ENCODE measurements at regions of chr4 and their contacts with region 1.

Region 1: DNA sequence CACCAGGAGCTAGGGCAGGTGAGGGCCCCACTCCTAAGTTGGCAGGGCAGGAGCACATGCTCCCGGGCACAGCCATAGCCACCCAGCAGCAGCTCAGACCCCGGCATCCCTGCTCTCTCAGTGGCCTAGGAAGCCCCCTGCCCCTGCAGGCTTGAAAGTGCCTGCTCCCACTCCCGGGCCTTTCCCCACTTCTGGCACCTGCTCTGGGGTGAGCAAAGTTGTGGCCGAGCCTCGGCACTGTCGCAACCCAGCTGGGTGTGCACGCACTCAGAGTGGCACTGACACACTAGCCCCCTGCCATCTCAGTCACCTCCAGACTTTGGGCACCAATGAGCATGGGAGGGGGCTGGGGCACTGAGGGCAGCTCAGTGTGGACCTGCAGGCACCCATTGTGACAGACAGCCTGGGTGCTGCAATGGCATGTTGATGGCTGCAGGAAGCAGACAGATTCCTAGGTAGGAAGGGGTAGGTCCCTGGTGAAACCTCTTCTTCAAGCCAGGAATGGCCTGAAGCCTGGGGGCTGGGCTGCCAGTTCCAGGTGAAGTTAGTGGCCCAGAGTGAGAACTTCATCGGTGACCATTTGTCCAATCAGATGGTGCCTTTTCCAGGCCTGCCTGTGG is 60.7 kb upstream of the CDKN2AIP start:
- DNase-seq: no peak
- H3K4me3 ChIP-seq: no peak overlapping the region
- H3K27ac ChIP-seq: no peak overlapping the region
- H3K4me1 ChIP-seq: no peaks in the 10 kb centered on the region
- CTCF ChIP-seq: no peak

Region 2: GRCh38 chr4:183324619-183325018 is 59.1 kb before region 1 on chr4:
- CTCF ChIA-PET with region 1: no interaction called
- POLR2A ChIA-PET with region 1: interaction called, 11 read pairs
- intact Hi-C with region 1: no loop called
- DNase-seq: no peak
- H3K4me3 ChIP-seq: no peak overlapping the region
- H3K27ac ChIP-seq: no peak overlapping the region
- H3K4me1 ChIP-seq: no peaks in the 10 kb centered on the region
- CTCF ChIP-seq: no peak

Region 3: GRCh38 chr4:183366206-183366835 is 17.4 kb before region 1 on chr4:
- CTCF ChIA-PET with region 1: no interaction called
- POLR2A ChIA-PET with region 1: no interaction called
- intact Hi-C with region 1: no loop called
- DNase-seq: no peak
- H3K4me3 ChIP-seq: no peak overlapping the region
- H3K27ac ChIP-seq: no peak overlapping the region
- H3K4me1 ChIP-seq: no peaks in the 10 kb centered on the region
- CTCF ChIP-seq: no peak

Region 4: GRCh38 chr4:183407128-183407585 is 23.4 kb after region 1 on chr4:
- CTCF ChIA-PET with region 1: no interaction called
- POLR2A ChIA-PET with region 1: no interaction called
- intact Hi-C with region 1: no loop called
- DNase-seq: peak; percentile 83
- H3K4me3 ChIP-seq: peak overlapping the region; percentile 59
- H3K27ac ChIP-seq: no peak overlapping the region
- H3K4me1 ChIP-seq: peaks cover 14% of the 10 kb centered on the region
- CTCF ChIP-seq: peak; percentile 89

Region 5: DNA sequence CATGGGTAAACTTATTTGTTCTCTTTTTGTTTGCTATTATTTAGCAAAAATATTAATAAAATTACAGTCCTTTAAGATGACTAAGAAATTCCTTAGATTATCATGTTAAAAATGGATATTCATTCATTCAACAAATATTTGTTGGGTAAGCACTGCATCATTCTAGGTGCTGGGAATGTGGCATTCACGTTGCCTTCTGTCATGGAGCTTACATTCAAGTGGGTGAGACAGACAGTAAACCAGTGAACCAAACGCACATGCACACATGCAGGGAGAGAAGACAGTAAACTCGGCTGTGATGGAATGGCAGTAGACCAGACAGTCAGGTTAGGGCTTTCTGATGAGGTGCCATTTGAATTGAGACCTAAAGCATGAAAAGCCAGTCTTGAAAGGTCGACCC is 613.2 kb after region 1 on chr4:
- CTCF ChIA-PET with region 1: no interaction called
- POLR2A ChIA-PET with region 1: no interaction called
- intact Hi-C with region 1: no loop called
- DNase-seq: no peak
- H3K4me3 ChIP-seq: no peak overlapping the region
- H3K27ac ChIP-seq: no peak overlapping the region
- H3K4me1 ChIP-seq: no peaks in the 10 kb centered on the region
- CTCF ChIP-seq: no peak

Measured in OCI-LY7 (cell line).